IMR-90 (cell line): ENCODE measurements at regions of chr3 and their contacts with region 1.

Region 1: GRCh38 chr3:185929192-185930151 is 8.3 kb downstream of the TRA2B start:
- DNase-seq: peak; percentile 61
- ATAC-seq: peak; percentile 12; the same call in 1 of the 2 replicates
- H3K4me3 ChIP-seq: no peak overlapping the region
- H3K27ac ChIP-seq: no peak overlapping the region
- H3K4me1 ChIP-seq: peaks cover 29% of the 10 kb centered on the region
- H3K27me3 ChIP-seq: no peaks in the 10 kb centered on the region
- CTCF ChIP-seq: no peak
- POLR2A ChIP-seq: no peak
- RAD21 ChIP-seq: no peak

Region 2: DNA sequence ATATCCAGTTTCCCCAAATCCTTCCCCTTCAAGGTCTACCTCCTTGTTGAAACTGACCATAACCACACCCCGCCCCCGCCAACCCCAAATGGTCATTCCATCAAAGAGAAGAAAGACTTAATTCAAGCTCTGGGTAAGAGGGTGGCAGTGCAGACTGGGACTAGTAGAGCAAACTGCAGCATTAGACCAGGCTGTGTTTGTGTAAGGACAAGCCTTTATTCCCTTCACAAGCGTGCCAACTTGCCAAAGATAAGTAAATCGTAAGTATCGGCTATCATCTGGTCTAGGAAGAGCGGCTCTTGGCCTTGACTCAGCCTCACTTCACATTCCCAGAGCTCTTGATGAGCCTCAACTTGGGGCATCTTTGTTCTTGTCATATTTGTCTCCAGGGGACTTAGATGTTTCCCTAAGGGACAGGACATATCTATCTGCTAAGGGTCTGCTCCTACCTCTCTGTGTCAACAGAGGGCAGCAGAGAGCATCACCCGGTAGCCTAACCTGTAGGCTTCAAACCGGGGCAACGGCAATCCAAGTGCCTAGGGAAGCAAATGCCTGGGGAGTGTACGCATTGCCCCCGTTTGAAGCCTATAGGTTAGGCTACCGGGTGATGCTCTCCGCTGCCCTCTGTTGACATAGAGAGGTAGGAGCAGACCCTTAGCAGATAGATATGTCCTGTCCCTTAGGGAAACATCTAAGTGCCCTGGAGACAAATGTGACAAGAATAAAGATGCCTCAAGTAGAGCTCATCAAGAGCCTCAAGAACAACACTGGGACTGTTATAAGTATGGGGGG is 575.5 kb before region 1 on chr3:
- CTCF ChIA-PET with region 1: no interaction called
- POLR2A ChIA-PET with region 1: no interaction called
- dilution Hi-C with region 1: no loop called
- in situ Hi-C with region 1: no loop called
- intact Hi-C with region 1: no loop called
- DNase-seq: peak; percentile 37
- ATAC-seq: peak; percentile 85
- H3K4me3 ChIP-seq: no peak overlapping the region
- H3K27ac ChIP-seq: no peak overlapping the region
- H3K4me1 ChIP-seq: no peaks in the 10 kb centered on the region
- H3K27me3 ChIP-seq: no peaks in the 10 kb centered on the region
- CTCF ChIP-seq: peak; percentile 55
- POLR2A ChIP-seq: no peak
- RAD21 ChIP-seq: peak; percentile 50

Region 3: GRCh38 chr3:185399737-185400667 is 529.5 kb before region 1 on chr3:
- CTCF ChIA-PET with region 1: no interaction called
- POLR2A ChIA-PET with region 1: no interaction called
- dilution Hi-C with region 1: no loop called
- in situ Hi-C with region 1: no loop called
- intact Hi-C with region 1: no loop called
- DNase-seq: peak; percentile 47
- ATAC-seq: no peak
- H3K4me3 ChIP-seq: no peak overlapping the region
- H3K27ac ChIP-seq: no peak overlapping the region
- H3K4me1 ChIP-seq: peaks cover 3% of the 10 kb centered on the region; the same call in 1 of the 2 replicates
- H3K27me3 ChIP-seq: no peaks in the 10 kb centered on the region
- CTCF ChIP-seq: no peak
- POLR2A ChIP-seq: no peak
- RAD21 ChIP-seq: no peak

Region 4: DNA sequence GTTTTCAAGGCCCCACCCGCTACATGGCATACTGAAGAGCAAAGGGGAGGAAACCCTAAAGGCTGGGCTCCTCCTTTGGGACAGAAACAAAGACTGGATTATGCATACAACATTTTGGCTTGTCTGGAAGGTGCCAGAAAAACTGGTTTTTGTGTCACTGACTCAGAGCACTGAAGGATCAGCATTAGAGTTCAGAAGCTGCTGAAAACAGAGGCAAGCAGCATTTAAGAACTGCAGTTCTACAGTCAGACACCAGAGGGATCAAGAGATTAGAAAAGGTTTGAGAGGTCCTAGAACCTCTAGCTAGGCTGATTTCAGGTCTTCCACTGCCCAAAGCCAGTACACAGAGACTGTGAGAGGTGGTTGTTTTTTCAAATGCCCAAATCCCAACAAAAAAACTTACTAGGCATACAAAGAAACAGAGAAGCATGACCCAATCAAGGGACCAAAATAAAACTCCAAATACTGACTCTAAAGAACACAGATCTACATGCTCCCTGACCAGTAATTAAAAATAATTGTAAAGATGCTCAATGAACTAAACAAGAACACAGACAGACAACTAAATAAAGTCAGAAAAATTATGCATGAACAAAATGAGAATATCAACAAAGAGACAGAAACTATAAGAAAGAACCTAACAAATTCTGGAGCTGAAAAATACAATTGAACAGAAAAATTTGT is 252.2 kb before region 1 on chr3:
- CTCF ChIA-PET with region 1: no interaction called
- POLR2A ChIA-PET with region 1: no interaction called
- dilution Hi-C with region 1: no loop called
- in situ Hi-C with region 1: loop called (anchors 25 kb)
- intact Hi-C with region 1: loop called (anchors 5 kb)
- DNase-seq: peak; percentile 77
- ATAC-seq: peak; percentile 94
- H3K4me3 ChIP-seq: no peak overlapping the region
- H3K27ac ChIP-seq: no peak overlapping the region
- H3K4me1 ChIP-seq: no peaks in the 10 kb centered on the region
- H3K27me3 ChIP-seq: no peaks in the 10 kb centered on the region
- CTCF ChIP-seq: peak; percentile 65
- POLR2A ChIP-seq: no peak
- RAD21 ChIP-seq: peak; percentile 78

Region 5: DNA sequence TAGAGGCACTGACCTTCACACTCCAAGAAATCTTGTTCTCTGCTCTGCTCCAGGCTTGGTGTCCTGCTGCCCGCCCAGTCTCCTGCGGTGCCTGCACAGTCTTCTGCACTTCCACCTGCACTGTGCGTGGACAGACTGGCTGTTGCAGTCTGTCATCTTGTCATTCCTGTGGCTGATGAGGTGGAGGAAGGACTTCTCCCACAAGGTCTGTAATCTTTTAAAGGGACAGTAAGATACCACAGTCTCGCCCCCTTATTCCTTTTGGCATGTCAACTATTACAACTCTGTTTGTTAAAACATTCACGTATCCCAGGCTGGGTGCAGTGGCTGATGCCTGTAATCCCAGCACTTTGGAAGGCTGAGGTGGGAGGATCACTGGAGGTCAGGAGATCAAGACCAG is 50.6 kb before region 1 on chr3:
- CTCF ChIA-PET with region 1: no interaction called
- POLR2A ChIA-PET with region 1: interaction called, 18 read pairs
- dilution Hi-C with region 1: no loop called
- in situ Hi-C with region 1: no loop called
- intact Hi-C with region 1: no loop called
- DNase-seq: no peak
- ATAC-seq: no peak
- H3K4me3 ChIP-seq: no peak overlapping the region
- H3K27ac ChIP-seq: no peak overlapping the region
- H3K4me1 ChIP-seq: no peaks in the 10 kb centered on the region
- H3K27me3 ChIP-seq: peaks cover 8% of the 10 kb centered on the region
- CTCF ChIP-seq: no peak
- POLR2A ChIP-seq: no peak
- RAD21 ChIP-seq: no peak

Region 6: DNA sequence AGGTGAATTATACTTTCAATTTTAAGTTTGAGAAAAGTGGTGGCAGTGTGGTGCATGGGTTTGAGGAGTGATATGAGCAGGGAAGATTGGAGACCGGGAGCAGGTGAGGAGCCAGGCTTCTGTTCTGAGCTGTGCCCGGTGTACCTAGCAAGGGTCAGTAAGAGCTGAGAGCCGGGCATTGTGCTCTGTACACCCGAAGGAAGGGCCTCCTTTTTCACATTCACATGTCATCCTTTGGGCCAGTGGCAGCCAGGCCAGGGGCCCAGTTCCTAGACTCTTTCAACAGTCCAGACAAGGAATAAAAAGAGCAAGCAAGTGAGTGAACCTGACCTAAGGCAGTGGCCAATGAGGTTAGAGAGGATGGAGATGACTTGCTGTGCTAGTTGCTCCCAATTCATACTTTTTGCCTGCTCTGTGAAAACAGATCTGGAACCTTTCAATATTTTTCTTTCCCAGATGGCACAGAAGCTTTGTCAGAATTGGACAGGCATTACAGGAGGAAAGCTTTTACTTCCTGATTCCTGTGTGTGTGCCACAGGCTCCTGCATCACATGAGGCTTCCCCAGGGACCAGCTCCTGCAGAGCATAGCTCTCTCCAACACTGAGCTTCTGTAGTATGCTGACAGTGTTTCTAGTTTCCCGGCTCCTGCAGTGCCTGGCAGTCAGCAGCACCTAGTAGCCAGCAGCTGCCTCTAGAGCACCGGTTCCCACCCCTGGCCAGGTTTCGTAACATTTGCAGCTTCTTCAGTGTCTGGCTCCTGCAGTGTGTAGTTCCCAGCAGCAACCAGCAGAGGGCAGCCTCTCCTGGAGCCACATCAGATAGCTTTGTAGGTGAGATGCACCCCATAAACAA is 13.7 kb after region 1 on chr3:
- CTCF ChIA-PET with region 1: interaction called, 18 read pairs
- POLR2A ChIA-PET with region 1: interaction called, 4 read pairs
- dilution Hi-C with region 1: no loop called
- in situ Hi-C with region 1: no loop called
- intact Hi-C with region 1: no loop called
- DNase-seq: peak; percentile 76
- ATAC-seq: peak; percentile 99
- H3K4me3 ChIP-seq: no peak overlapping the region
- H3K27ac ChIP-seq: no peak overlapping the region
- H3K4me1 ChIP-seq: no peaks in the 10 kb centered on the region
- H3K27me3 ChIP-seq: peaks cover 4% of the 10 kb centered on the region
- CTCF ChIP-seq: peak; percentile 85
- POLR2A ChIP-seq: no peak
- RAD21 ChIP-seq: peak; percentile 65